ENCODE measurements at regions of chr9 and their contacts with region 1.

Region 1: GRCh38 chr9:89542401-89543021 is 44.6 kb upstream of the SEMA4D start:
- DNase-seq: no peak
- H3K4me3 ChIP-seq: no peak overlapping the region
- H3K4me3 Mint-ChIP-seq: no peak overlapping the region
- H3K27ac ChIP-seq: no peak overlapping the region
- H3K27ac Mint-ChIP-seq: peak overlapping the region in 2 of 7 donors; percentile 8 to 13
- H3K4me1 ChIP-seq: peaks cover 37% of the 10 kb centered on the region
- H3K4me1 Mint-ChIP-seq: peaks cover 25 to 55% (median 42%) of the 10 kb centered on the region in 4 donors
- H3K27me3 ChIP-seq: no peaks in the 10 kb centered on the region
- H3K27me3 Mint-ChIP-seq: no peaks in the 10 kb centered on the region

Region 2: GRCh38 chr9:89204801-89205200 is 337.7 kb before region 1 on chr9:
- CTCF ChIA-PET with region 1: no interaction called
- POLR2A ChIA-PET with region 1: no interaction called
- intact Hi-C with region 1: no loop called
- DNase-seq: no peak
- H3K4me3 ChIP-seq: no peak overlapping the region
- H3K4me3 Mint-ChIP-seq: no peak overlapping the region
- H3K27ac ChIP-seq: no peak overlapping the region
- H3K27ac Mint-ChIP-seq: no peak overlapping the region
- H3K4me1 ChIP-seq: no peaks in the 10 kb centered on the region
- H3K4me1 Mint-ChIP-seq: no peaks in the 10 kb centered on the region
- H3K27me3 ChIP-seq: no peaks in the 10 kb centered on the region
- H3K27me3 Mint-ChIP-seq: peaks cover 0 to 4% of the 10 kb centered on the region in 2 donors

Region 3: DNA sequence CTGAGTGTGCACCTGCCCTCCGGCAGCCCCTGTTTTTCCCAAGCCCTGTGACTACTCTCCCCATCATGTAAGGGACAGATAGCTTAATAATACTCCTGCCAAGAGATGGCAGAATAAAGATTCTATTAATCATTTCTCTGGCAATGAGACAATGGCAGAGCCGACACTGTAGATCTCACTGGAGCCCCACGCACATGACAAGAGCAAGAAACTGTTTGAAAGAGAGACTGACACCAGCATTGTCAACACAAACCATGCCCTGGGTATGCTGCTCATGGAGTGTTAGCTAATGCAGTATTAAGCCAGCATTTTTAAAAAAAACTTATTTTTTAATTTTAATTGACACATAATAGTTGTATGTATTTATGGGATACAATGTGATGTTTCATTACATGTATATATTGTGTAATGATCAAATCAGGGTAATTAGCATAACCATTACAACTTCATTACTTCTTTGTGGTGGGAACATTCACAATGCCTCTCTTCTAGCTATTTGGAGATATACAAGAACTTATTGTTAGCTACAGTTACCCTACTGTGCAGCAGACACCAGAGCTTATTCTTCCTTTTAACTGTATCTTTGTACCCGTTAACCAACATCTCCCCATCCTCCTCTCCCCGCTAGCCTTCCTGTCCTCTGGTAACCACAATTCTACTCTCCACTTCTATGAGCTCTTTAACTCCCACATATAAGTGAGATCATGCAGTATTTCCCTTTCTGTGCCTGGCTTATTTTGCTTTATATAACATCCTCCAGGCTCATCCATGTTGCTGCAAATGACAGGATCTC is 13.1 kb before region 1 on chr9:
- CTCF ChIA-PET with region 1: interaction called, 80 read pairs
- POLR2A ChIA-PET with region 1: interaction called, 99 read pairs
- intact Hi-C with region 1: no loop called
- DNase-seq: peak; percentile 36 to 56 (median 40)
- H3K4me3 ChIP-seq: no peak overlapping the region
- H3K4me3 Mint-ChIP-seq: peak overlapping the region; percentile 15 to 89 (median 66)
- H3K27ac ChIP-seq: no peak overlapping the region
- H3K27ac Mint-ChIP-seq: peak overlapping the region; percentile 39 to 92 (median 76)
- H3K4me1 ChIP-seq: peaks cover 98% of the 10 kb centered on the region
- H3K4me1 Mint-ChIP-seq: peaks cover 74 to 100% (median 91%) of the 10 kb centered on the region in 4 donors
- H3K27me3 ChIP-seq: no peaks in the 10 kb centered on the region
- H3K27me3 Mint-ChIP-seq: no peaks in the 10 kb centered on the region